Heart right ventricle (tissue), 16 donors: ENCODE measurements at regions of chr5 and their contacts with region 1.

Region 1: DNA sequence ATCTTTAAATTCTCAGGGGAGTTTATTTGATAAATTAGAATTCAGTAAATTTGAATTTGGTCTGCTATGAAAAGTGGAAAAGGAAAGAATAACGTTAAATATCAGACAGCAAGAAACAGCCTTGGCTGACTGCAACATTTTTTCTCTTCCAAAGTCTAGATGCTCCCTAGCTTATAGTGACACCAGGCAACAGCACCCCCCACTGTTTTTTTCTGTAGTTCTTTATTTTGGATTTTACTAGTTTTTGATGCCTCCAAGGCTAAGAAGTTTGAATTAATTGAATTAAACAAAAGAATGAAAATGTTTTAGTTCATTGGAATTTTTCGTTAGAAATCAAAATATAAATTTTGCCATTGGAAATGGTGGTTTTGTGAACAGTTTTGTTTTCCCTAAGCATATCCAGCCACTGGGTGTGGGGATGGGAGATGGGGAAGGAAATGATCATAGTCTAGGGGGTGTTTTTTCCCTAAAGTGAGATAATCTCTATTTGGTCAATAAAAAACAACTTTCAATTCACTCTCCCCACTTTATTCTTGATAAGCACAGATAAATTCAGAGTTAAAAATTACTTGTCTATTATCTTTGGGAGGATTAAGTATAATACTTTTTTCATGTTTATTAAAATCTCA is 199.3 kb upstream of the CD180 start:
- DNase-seq: no peak
- ATAC-seq: peak in 1 of 8 donors; percentile 33
- H3K4me3 ChIP-seq: no peak overlapping the region
- H3K27ac ChIP-seq: no peak overlapping the region
- H3K4me1 ChIP-seq: no peaks in the 10 kb centered on the region
- H3K27me3 ChIP-seq: no peaks in the 10 kb centered on the region
- CTCF ChIP-seq: peak in 3 of 9 donors; percentile 9 to 30 (median 21)

Region 2: GRCh38 chr5:66498791-66499207 is 897.1 kb before region 1 on chr5:
- intact Hi-C with region 1: no loop called
- DNase-seq: peak in 1 of 2 donors; percentile 34
- ATAC-seq: peak; percentile 42 to 93 (median 84)
- H3K4me3 ChIP-seq: no peak overlapping the region
- H3K27ac ChIP-seq: no peak overlapping the region
- H3K4me1 ChIP-seq: peaks cover 0 to 7% (median 0%) of the 10 kb centered on the region in 9 donors
- H3K27me3 ChIP-seq: no peaks in the 10 kb centered on the region
- CTCF ChIP-seq: peak in 8 of 9 donors; percentile 16 to 58 (median 38)

Region 3: GRCh38 chr5:67437905-67438845 is 42.3 kb after region 1 on chr5:
- intact Hi-C with region 1: no loop called
- DNase-seq: no peak
- ATAC-seq: peak in 1 of 8 donors; percentile 29
- H3K4me3 ChIP-seq: no peak overlapping the region
- H3K27ac ChIP-seq: no peak overlapping the region
- H3K4me1 ChIP-seq: peaks cover 0 to 8% (median 0%) of the 10 kb centered on the region in 9 donors
- H3K27me3 ChIP-seq: no peaks in the 10 kb centered on the region
- CTCF ChIP-seq: no peak

Region 4: DNA sequence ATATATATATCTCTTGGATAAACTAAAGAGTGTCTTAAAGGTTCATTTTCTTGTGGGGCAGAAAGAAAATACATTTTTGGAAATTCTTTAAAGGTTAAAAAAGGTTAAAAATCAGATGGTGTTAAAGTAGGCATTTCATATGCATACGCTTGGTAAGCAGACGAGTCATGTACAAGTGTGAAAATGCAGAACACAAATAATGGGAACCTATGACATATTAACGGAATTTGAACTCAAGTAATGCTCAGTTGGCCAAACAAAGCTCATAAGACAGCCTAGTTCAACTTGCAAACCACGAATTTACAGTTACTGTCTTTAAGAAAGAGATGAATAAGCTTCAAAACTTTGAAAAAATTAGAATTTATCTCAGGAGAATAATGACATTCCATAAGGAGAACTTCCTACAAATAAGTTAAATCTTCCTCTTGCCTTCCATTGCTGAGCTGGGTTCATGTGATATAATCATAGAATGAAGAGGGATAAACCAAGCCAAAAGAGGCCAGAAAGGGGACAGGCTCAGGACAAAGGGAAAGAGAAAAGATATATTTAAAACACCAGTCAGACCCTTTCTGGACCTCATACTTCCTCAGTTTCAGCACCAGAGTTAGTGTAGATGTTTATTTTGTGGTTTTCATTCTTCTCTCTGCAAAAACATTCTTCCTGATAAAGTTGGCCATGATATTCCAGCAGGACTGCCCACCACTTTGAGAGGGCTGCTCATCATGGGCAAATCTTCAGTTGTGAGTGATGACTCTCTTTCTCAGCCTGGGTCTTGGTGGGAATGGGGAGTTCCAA is 57.4 kb after region 1 on chr5:
- intact Hi-C with region 1: loop called in 1 of 10 experiments (anchors 10 kb)
- DNase-seq: no peak
- ATAC-seq: no peak
- H3K4me3 ChIP-seq: no peak overlapping the region
- H3K27ac ChIP-seq: no peak overlapping the region
- H3K4me1 ChIP-seq: no peaks in the 10 kb centered on the region
- H3K27me3 ChIP-seq: no peaks in the 10 kb centered on the region
- CTCF ChIP-seq: no peak